Endothelial cell of umbilical vein (primary cell): ENCODE measurements at regions of chr1 and their contacts with region 1.

Region 1: DNA sequence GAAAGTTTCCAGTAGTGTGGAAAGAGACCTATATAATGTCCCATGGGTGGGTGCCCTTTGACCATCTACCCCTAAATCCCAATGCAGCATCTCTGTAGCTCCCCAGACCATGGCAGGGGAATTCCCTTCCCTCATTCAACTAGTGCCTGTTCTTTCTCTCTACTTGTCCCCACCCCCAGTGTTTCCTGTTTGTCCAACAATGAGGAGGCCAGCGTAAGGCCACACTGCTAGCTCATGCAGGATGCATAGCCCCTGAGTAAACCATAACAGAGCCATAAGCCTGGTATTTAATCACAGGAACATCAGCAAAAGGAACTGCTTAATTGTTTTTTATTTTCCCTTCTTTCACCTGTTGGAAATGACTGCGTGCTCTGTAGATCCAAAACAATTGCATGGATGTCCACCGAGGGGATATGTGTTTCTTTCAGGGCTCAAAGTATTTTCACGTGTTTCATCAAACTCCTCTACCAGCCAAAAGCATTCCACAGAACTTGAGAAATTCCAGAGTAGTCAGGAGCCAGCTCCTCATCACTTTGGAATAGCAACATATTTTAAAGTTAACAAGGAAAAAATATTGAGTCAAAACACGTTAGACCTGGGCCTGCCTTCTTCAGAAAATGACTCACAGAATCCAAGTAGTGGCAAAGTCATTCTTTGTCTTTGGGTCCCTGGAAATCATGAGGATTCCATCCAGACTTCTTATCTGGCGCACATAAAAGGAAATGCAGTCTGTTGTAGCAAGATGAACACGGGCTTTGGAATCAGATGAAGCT is 162.5 kb upstream of the SGIP1 start:
- DNase-seq: peak; percentile 98
- H3K4me3 ChIP-seq: peak overlapping the region in 1 of 3 experiments; percentile 29
- H3K27ac ChIP-seq: peak overlapping the region; percentile 99
- H3K4me1 ChIP-seq: peaks cover 60% of the 10 kb centered on the region
- H3K27me3 ChIP-seq: no peaks in the 10 kb centered on the region
- CTCF ChIP-seq: no peak
- POLR2A ChIP-seq: no peak

Region 2: DNA sequence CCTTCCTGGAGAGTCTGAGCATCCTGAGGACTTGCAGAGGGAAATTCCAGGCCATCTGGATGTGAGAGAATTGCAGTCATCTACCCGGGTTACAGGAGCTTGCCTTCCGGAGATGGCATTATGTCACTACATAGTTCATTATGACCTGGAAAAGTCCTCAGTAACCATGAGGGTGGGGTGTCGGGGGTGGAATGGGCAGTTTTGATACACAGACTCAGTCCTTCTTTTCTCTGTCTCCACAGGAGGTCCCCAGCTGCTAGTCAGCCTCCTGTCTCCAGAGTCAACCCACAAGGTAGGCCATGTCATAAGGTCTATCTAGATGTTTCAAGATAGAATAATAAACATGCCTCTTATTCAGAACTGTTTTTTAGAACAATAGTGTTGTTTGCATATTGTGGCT is 105.6 kb before region 1 on chr1:
- CTCF ChIA-PET with region 1: no interaction called
- POLR2A ChIA-PET with region 1: interaction called, 3 read pairs
- dilution Hi-C with region 1: no loop called
- intact Hi-C with region 1: loop called (anchors 1 kb)
- DNase-seq: peak; percentile 83
- H3K4me3 ChIP-seq: no peak overlapping the region
- H3K27ac ChIP-seq: peak overlapping the region; percentile 89
- H3K4me1 ChIP-seq: peaks cover 66% of the 10 kb centered on the region
- H3K27me3 ChIP-seq: no peaks in the 10 kb centered on the region
- CTCF ChIP-seq: no peak
- POLR2A ChIP-seq: no peak

Region 3: GRCh38 chr1:66271216-66271903 is 100.1 kb before region 1 on chr1:
- CTCF ChIA-PET with region 1: no interaction called
- POLR2A ChIA-PET with region 1: interaction called, 3 read pairs
- dilution Hi-C with region 1: no loop called
- intact Hi-C with region 1: loop called (anchors 1 kb)
- DNase-seq: peak; percentile 98
- H3K4me3 ChIP-seq: no peak overlapping the region
- H3K27ac ChIP-seq: peak overlapping the region; percentile 71
- H3K4me1 ChIP-seq: peaks cover 49% of the 10 kb centered on the region
- H3K27me3 ChIP-seq: no peaks in the 10 kb centered on the region
- CTCF ChIP-seq: no peak
- POLR2A ChIP-seq: peak; percentile 73

Region 4: GRCh38 chr1:66436378-66437145 is 65.1 kb after region 1 on chr1:
- CTCF ChIA-PET with region 1: interaction called, 5 read pairs
- POLR2A ChIA-PET with region 1: no interaction called
- dilution Hi-C with region 1: no loop called
- intact Hi-C with region 1: loop called (anchors 1 kb)
- DNase-seq: peak; percentile 46
- H3K4me3 ChIP-seq: no peak overlapping the region
- H3K27ac ChIP-seq: no peak overlapping the region
- H3K4me1 ChIP-seq: peaks cover 34% of the 10 kb centered on the region
- H3K27me3 ChIP-seq: no peaks in the 10 kb centered on the region
- CTCF ChIP-seq: peak; percentile 13 to 31
- POLR2A ChIP-seq: no peak